ENCODE measurements at regions of chr10 and their contacts with region 1.

Region 1: GRCh38 chr10:98309366-98310355 is 41.7 kb upstream of the LOXL4 start:
- DNase-seq: peak; percentile 73 to 89 (median 87)
- ATAC-seq: peak; percentile 94 to 96
- H3K4me3 ChIP-seq: no peak overlapping the region
- H3K27ac ChIP-seq: no peak overlapping the region
- H3K4me1 ChIP-seq: no peaks in the 10 kb centered on the region
- H3K27me3 ChIP-seq: no peaks in the 10 kb centered on the region

Region 2: DNA sequence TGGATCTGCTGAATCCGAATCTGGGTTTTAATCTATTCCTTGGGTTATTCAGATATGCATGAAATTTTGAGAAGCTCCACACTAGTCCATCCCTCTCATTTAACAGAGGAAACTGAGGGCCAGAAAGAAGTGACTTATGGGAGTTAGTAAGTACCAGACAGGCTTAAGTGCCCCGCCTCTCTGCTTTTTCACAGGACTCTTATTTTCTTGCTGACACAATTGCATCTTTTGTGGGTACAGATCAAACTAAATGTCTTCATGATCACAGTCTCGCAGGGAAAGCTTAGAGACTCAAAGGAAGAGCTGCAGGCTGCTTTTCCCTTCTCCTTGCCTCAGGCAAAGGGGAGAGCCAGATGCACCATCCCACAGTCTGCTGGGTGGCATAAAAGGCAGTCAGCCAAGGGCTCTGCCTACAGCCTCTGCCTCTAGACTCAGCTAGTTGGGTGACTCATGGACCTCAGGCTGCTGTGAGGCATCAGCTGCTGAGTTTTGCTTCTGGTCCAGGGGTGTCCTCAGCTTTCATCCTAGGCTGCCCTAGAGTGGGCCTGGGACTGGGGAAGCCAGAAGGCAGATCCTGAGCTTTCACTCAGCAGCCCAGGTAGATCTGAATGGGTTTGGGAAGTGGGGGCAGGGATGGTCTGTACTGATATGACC is 448.4 kb before region 1 on chr10:
- intact Hi-C with region 1: no loop called
- DNase-seq: no peak
- ATAC-seq: peak; percentile 46 to 53
- H3K4me3 ChIP-seq: no peak overlapping the region
- H3K27ac ChIP-seq: no peak overlapping the region
- H3K4me1 ChIP-seq: no peaks in the 10 kb centered on the region
- H3K27me3 ChIP-seq: no peaks in the 10 kb centered on the region

Region 3: DNA sequence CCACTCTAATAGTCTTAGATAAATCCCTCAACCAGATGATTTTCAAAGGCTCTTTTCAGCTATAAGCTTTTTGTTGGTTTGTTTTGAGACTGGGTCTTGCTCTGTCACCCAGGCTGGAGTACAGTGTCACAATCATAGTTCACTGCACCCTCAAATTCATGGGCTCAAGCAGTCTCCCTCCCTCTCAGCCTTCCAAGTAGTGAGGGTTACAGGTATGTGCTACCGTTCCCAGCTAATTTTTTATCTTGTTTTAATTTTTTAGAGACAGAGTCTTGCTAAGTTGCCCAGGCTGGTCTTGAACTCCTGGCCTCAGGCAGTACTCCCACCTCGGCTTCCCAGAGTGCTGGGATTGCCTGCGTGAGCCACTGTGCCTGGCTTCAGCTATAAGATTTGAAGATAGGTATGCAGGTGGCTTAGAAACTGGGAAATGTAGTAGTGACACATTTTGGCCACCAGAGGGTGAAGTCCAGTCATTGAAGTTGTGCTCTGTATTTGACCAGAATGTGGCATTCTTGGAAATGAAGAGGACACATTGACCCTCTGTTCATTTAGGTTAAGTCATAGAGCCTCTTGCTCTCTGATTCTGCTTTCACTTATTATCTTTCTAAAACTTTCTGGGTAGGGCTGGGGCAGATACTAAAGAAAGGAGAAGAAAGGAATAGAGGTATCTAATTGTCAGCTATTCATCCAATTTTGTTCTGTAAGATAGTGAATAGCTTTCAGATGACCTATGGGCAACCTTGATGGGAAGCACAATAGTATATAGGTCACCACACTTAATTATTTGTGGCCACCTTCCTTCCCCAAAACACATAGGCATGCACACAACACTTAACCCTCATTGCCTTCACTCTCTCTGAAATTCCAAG is 139.2 kb before region 1 on chr10:
- intact Hi-C with region 1: loop called (anchors 5 to 10 kb)
- DNase-seq: no peak
- ATAC-seq: peak; percentile 72 to 74
- H3K4me3 ChIP-seq: no peak overlapping the region
- H3K27ac ChIP-seq: no peak overlapping the region
- H3K4me1 ChIP-seq: peaks cover 5% of the 10 kb centered on the region
- H3K27me3 ChIP-seq: no peaks in the 10 kb centered on the region

Region 4: DNA sequence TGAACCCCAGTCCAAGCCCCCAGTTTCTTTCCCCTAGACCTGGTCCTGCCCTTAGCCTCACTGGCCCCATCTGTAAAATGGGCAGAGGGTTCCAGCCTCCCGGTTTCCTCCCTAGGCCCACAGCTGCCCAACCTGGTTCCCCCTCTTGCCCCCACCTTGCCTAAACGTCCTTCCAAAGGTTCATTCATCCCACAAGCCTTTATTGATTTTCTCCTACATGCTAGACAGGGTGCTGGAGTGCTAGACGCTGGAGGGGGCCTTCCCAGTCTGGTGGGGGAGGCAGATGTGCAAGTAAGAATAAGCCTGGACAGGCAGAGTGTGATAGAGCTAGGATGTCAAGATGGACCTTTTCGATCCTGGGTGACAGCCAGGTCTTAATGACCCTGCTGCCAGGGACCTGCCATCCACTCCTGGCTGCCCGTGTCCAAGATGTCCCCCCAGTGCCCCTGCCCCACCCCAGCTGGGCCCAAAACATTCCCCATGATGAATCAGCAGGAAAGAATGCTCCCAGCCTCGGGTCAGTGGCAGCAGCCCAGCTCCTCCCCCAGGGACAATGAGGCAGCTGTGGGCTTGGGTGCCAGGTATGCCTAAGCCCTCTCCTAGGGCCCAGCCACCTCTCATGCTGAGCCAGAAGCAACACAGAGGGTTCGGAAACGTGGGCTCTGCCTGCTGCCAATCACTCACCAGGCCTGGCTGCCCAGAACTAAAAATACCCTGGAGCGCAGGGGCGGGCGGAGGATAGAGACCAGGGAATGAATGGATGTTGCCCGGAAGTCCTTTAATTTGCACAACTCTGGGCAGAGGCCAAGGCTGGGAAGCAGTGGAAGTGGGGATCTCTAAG is 40.4 kb before region 1 on chr10:
- intact Hi-C with region 1: loop called in 2 of 4 experiments (anchors 5 kb)
- DNase-seq: peak; percentile 81 to 91 (median 88)
- ATAC-seq: peak; percentile 88 to 89
- H3K4me3 ChIP-seq: no peak overlapping the region
- H3K27ac ChIP-seq: peak overlapping the region; percentile 49
- H3K4me1 ChIP-seq: peaks cover 10% of the 10 kb centered on the region
- H3K27me3 ChIP-seq: no peaks in the 10 kb centered on the region

Measured in right cardiac atrium (tissue), 5 donors.